ENCODE measurements at regions of chr2 and their contacts with region 1.

Region 1: DNA sequence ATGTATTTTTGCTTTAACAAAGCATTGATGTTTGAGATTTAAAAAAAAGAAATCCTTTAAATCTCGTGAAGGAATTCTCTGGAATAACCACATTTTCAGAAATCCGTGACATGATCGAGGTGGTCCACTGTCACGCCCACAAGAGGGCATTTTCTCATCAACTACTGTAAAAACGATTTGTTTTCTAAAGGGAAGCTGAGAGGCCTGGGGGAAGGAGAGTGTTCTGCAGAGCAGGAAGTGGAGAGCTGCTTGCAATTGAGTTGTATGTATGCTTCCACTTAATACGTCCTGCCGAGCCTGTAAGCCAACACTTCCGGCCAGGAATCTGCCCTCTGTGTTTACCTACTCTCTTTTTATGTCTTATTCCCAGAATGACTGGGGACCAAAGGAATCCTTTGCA is 19.4 kb downstream of the KLHL29 start:
- DNase-seq: peak; percentile 47
- H3K4me3 Mint-ChIP-seq: no peak overlapping the region
- H3K27ac Mint-ChIP-seq: no peak overlapping the region
- H3K4me1 Mint-ChIP-seq: peaks cover 14% of the 10 kb centered on the region
- H3K27me3 Mint-ChIP-seq: no peaks in the 10 kb centered on the region

Region 2: GRCh38 chr2:23532391-23533337 is 128.2 kb after region 1 on chr2:
- CTCF ChIA-PET with region 1: no interaction called
- intact Hi-C with region 1: loop called (anchors 1 kb)
- DNase-seq: peak; percentile 68
- H3K4me3 Mint-ChIP-seq: peak overlapping the region; percentile 95
- H3K27ac Mint-ChIP-seq: peak overlapping the region; percentile 89
- H3K4me1 Mint-ChIP-seq: peaks cover 40% of the 10 kb centered on the region
- H3K27me3 Mint-ChIP-seq: no peaks in the 10 kb centered on the region

Region 3: DNA sequence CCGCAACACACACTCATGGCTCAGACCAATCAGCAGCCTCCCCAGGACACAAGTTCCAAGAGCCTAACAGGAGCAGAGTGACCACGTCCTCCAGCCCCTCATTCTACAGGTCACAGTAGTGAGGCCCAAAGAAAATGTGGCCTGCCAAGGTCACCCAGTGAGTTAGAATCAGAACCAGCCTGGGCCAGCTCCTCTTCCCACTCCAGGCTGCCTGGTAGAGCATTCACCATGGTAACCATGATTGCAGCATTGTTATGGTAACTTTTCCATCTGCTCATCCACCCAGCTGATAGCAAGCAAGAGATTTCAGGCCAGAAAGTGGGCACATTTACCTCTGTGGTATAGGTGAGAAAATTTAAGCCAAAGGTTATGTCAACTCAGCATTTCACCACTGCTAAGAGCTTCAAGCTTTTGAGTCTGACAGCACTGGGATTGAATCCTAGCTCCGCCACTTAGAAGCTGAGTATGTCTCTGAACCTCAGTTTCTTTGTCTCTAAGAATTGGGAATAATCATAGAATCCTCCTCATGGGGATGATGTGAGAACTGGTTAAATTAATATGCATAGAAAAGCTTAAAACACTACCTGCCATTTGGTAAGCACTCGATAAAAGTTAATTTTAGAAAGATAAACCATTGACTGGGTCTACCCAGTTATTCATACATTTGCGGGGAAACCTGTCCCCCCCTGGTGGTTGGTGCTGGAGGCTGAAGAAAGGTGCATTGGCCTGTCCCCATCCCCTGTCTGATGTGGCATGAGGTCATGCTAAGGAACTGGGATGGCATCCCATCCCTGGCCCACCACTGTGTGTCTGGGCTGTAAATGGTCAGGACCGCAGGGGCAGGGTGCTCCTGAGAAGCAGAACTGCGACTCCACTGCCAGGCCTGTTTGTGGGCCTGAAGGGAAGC is 162.1 kb after region 1 on chr2:
- CTCF ChIA-PET with region 1: no interaction called
- intact Hi-C with region 1: loop called (anchors 1 kb)
- DNase-seq: peak; percentile 52
- H3K4me3 Mint-ChIP-seq: no peak overlapping the region
- H3K27ac Mint-ChIP-seq: no peak overlapping the region
- H3K4me1 Mint-ChIP-seq: no peaks in the 10 kb centered on the region
- H3K27me3 Mint-ChIP-seq: no peaks in the 10 kb centered on the region

Measured in activated naive CD4-positive, alpha-beta T cell treated with anti-CD3 and anti-CD28 coated beads for 36 hours (primary cell).